Esophagus squamous epithelium (tissue), 5 donors: ENCODE measurements at regions of chr12 and their contacts with region 1.

Region 1: DNA sequence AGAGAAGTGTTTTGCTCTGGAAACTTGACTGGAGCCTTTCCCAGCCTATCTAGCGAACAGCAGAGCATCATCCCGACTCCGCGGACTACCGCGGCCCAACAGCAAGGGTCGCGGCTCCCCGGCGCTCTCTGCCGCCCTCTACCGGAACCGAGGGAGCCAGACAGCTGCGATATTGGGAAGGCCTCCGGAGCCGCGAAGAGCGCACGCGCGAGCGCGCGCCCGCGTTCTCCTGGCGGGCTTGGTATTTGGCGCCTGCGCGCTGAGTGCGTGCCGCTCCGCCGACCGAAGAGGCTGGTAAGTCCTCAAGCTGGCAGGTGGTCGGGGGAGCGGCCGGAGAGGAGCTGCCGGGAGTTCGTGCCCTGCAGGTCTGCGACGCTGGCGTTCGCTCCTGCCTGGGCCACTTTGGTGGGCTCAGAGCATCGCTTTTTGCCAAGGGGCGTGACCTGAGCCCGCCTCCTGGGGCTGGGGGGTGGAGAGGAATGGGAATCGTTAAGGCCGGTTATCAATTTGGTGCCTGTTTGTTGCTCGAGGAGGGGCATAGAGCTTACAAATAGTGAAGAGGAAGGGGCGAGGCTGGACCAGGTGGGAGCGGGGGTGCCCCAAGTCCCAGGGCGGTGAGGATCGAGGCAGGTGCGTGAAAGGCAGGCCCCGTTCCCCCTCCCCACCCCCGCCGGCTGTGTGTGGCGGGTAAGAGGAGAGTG is at the start of gene TMEM106C:
- DNase-seq: peak; percentile 36
- H3K4me3 ChIP-seq: peak within 1 kb of the TSS; percentile 73 to 91 (median 78)
- H3K27ac ChIP-seq: peak within 1 kb of the TSS; percentile 53 to 83 (median 72)
- H3K4me1 ChIP-seq: peaks cover 7 to 43% (median 9%) of the 10 kb centered on the region in 3 donors
- H3K27me3 ChIP-seq: peaks cover 0 to 5% (median 0%) of the 10 kb centered on the region in 4 donors
- CTCF ChIP-seq: peak; percentile 90 to 99 (median 96)
- POLR2A ChIP-seq: peak in 1 of 4 donors; percentile 41
- total RNA-seq, gene TMEM106C: 24.1 to 92.7 (median 63.5) TPM

Region 2: DNA sequence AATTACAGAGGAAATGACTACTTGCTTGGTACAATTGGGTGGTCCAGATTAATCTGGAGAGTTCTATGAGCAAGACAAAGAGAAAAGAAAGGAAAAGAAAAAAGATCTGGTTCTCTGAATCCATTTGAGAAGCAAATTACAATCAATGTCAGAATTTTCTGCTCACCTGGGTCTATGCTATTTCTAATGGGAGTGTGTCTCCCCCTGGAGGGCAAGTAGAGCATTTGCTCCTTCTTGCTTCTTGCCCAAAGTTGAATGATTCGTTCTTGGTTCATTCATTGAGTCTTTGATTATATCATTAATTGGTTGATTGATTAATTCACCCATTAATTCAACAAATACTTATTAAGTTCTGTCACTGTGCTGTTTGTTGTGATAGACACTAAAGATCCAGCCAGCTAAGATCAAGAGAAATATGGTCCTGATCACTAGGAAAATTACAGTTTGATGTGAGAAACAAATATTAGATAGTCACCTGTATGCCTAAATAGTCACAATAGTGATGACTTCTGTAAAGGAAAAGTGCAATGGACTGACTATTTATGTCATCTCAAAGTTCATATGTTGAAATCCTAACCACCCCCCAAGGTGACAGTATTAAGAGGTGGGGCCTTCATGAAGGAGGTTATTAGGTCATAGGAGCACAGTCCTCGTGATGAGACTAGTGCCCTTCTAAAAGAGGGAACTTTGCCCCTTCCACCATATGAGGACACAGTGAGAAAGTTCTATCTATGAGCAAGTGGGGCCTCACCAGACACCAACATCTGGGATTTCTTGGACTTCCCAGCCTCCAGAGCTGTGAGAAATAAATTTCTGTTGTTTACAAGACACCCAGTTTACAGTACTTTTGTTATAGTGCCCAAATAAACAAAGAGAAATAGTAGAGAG is 201.8 kb after region 1 on chr12:
- intact Hi-C with region 1: loop called (anchors 10 kb)
- DNase-seq: no peak
- H3K4me3 ChIP-seq: no peak overlapping the region
- H3K27ac ChIP-seq: no peak overlapping the region
- H3K4me1 ChIP-seq: no peaks in the 10 kb centered on the region
- H3K27me3 ChIP-seq: peaks cover 0 to 33% (median 1%) of the 10 kb centered on the region in 4 donors
- CTCF ChIP-seq: peak; percentile 32 to 88 (median 82)
- POLR2A ChIP-seq: no peak